Colonic mucosa (tissue), 4 donors: ENCODE measurements at regions of chr5 and their contacts with region 1.

Region 1: DNA sequence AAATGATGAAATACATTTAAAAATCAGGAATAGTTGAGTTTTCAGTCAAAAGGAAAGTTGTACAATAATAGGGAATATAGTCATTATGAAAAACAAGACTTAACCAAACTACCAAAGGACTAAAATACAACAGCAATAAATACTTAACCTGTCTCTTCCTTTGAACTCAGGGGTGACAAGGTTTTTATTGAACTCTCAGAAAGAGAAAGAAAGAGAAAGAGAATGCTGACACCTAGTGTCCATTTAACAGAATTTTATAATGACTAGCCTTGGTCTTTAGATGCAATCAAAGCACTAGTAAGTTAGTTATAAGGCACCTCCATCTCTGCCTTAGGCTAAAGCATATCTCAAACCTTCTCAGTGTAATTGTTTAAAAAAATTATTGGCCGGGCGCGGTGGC is 47.5 kb downstream of the UIMC1 start:
- DNase-seq: no peak
- H3K4me3 ChIP-seq: no peak overlapping the region
- H3K27ac ChIP-seq: no peak overlapping the region
- H3K4me1 ChIP-seq: no peaks in the 10 kb centered on the region
- H3K27me3 ChIP-seq: no peaks in the 10 kb centered on the region
- CTCF ChIP-seq: no peak

Region 2: DNA sequence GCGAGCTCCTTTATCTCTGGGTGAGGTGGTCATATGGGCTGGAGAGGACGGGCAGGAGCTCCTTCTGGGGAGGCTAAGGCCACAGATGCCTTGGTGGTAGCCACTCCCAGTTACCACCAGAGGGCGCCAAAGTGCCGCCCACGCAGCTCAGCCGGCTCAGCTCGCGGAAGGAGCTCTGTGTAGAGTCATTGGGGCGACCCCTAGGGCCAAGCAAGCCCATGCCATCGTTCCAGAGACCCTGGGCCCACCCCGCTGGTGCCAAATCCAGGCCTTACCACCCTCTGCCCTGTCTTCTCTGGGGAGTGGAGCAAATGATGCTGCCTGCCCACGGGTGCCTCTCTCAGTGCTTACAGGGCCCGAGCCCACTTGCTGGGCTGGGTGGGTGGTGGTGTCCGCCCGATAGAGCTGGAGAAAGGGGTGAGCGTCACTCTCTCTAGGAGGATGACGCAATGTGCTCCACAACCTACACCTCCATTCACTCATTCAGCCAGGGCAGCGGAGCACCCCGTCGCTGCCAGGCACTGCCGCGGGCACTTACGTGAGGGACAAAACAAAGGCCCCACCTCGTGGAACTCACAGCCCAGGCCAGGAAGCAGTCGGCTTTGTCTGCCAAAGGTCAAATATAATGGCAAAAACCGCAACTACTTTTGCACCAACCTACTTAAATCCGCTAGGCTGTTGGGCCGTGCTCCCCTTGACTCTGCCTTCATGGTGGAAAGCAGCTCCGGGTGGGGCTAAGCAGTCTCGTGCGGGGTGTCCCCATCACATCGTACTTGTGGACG is 298.0 kb before region 1 on chr5:
- intact Hi-C with region 1: loop called (anchors 5 kb)
- DNase-seq: peak; percentile 71
- H3K4me3 ChIP-seq: no peak overlapping the region
- H3K27ac ChIP-seq: no peak overlapping the region
- H3K4me1 ChIP-seq: peaks cover 9% of the 10 kb centered on the region
- H3K27me3 ChIP-seq: no peaks in the 10 kb centered on the region
- CTCF ChIP-seq: peak; percentile 98